Transverse colon (tissue), 4 donors: ENCODE measurements at regions of chr22 and their contacts with region 1.

Region 1: DNA sequence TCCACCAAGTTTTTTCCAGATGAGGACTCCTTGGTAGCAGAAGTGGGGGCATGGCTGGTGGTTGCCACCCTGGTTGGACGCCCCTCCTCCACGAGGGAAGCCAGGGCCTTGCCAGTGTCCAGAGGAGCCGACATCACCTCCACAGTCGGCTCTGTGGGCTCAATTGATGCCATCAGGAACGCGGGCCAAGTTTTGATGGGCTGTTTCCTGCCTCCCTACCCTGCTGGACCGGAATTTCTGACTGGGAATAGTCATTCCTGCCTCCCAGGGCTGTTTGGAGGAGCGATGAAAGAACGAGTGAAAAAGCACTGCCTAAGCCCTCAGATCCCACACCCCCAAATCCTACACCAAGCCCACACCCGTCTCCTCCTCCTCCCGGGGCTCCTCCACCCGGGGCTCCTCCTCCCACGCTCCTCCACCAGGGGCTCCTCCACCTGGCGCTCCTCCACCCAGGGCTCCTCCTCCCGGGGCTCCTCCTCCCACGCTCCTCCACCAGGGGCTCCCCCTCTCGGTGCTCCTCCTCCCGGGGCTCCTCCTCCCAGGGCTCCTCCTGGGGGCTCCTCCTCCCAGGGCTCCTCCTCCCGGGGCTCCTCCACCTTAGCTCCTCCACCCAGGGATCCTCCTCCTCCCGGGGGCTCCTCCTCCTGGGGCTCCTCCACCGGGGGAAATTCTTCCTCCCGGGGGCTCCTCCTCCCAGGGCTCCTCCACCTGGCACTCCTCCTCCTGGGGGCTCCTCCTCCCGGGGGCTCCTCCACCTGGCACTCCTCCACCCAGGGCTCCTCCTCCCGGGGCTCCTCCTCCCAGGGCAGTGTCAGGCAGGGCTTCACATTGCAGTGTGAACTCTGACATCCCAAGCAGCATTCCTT is 10.0 kb upstream of the PRR5 start:
- DNase-seq: no peak
- H3K4me3 ChIP-seq: no peak overlapping the region
- H3K27ac ChIP-seq: no peak overlapping the region
- H3K4me1 ChIP-seq: no peaks in the 10 kb centered on the region
- H3K27me3 ChIP-seq: no peaks in the 10 kb centered on the region
- CTCF ChIP-seq: no peak
- EP300 ChIP-seq: no peak
- POLR2A ChIP-seq: no peak

Region 2: GRCh38 chr22:44729391-44730021 is 37.5 kb after region 1 on chr22:
- in situ Hi-C with region 1: loop called in 1 of 4 experiments (anchors 5 kb)
- intact Hi-C with region 1: loop called (anchors 2 kb)
- DNase-seq: no peak
- H3K4me3 ChIP-seq: peak overlapping the region in 1 of 4 donors; percentile 6
- H3K27ac ChIP-seq: peak overlapping the region; percentile 45 to 72 (median 60)
- H3K4me1 ChIP-seq: peaks cover 0 to 17% (median 6%) of the 10 kb centered on the region in 4 donors
- H3K27me3 ChIP-seq: no peaks in the 10 kb centered on the region
- CTCF ChIP-seq: peak in 1 of 5 experiments; percentile 12
- EP300 ChIP-seq: no peak
- POLR2A ChIP-seq: no peak